HCT116 (cell line): ENCODE measurements at regions of chr15 and their contacts with region 1.

Region 1: DNA sequence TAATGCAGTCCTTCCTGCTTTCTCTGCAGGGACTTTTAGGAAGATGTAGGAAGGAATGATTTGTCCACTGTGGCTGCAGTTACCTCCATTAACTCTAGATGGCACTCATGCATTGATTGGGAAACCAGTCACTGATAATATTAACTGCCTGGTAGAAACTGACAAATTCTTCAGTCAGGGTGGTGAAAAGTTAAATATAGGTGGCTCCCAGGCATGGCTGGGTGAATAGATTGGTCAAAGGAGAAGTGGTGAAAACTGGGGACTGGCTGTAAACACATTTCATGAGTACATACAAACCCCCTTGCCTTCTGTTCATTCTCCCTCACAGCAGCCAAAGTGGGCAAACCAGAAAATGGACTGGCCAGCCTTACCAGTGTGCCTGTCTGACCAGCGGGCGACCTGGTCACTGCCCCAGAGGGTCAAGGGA is 333.4 kb downstream of the THSD4 start:
- DNase-seq: peak; percentile 56
- ATAC-seq: peak; percentile 26
- H3K4me3 ChIP-seq: no peak overlapping the region
- H3K27ac ChIP-seq: no peak overlapping the region; the same call in 1 of the 2 replicates
- H3K4me1 ChIP-seq: peaks cover 50 to 55% of the 10 kb centered on the region in 2 experiments
- H3K27me3 ChIP-seq: no peaks in the 10 kb centered on the region
- CTCF ChIP-seq: peak; percentile 79 to 94 (median 83)
- POLR2A ChIP-seq: no peak
- RAD21 ChIP-seq: peak; percentile 88

Region 2: GRCh38 chr15:71651750-71652186 is 203.1 kb after region 1 on chr15:
- CTCF ChIA-PET with region 1: no interaction called
- POLR2A ChIA-PET with region 1: no interaction called
- RAD21 ChIA-PET with region 1: no interaction called
- intact Hi-C with region 1: loop called (anchors 1 kb)
- DNase-seq: peak; percentile 39
- ATAC-seq: peak; percentile 75
- H3K4me3 ChIP-seq: no peak overlapping the region
- H3K27ac ChIP-seq: no peak overlapping the region
- H3K4me1 ChIP-seq: no peaks in the 10 kb centered on the region
- H3K27me3 ChIP-seq: no peaks in the 10 kb centered on the region
- CTCF ChIP-seq: peak; percentile 47 to 58 (median 49); a peak in 5 of 6 replicates
- POLR2A ChIP-seq: no peak
- RAD21 ChIP-seq: peak; percentile 67

Region 3: GRCh38 chr15:71730277-71731144 is 281.8 kb after region 1 on chr15:
- CTCF ChIA-PET with region 1: no interaction called
- POLR2A ChIA-PET with region 1: no interaction called
- RAD21 ChIA-PET with region 1: no interaction called
- intact Hi-C with region 1: loop called (anchors 1 kb)
- DNase-seq: peak; percentile 43
- ATAC-seq: peak; percentile 96
- H3K4me3 ChIP-seq: no peak overlapping the region
- H3K27ac ChIP-seq: no peak overlapping the region
- H3K4me1 ChIP-seq: no peaks in the 10 kb centered on the region
- H3K27me3 ChIP-seq: no peaks in the 10 kb centered on the region; the same call in 1 of the 2 replicates
- CTCF ChIP-seq: peak; percentile 70 to 82 (median 75)
- POLR2A ChIP-seq: no peak
- RAD21 ChIP-seq: peak; percentile 71

Region 4: DNA sequence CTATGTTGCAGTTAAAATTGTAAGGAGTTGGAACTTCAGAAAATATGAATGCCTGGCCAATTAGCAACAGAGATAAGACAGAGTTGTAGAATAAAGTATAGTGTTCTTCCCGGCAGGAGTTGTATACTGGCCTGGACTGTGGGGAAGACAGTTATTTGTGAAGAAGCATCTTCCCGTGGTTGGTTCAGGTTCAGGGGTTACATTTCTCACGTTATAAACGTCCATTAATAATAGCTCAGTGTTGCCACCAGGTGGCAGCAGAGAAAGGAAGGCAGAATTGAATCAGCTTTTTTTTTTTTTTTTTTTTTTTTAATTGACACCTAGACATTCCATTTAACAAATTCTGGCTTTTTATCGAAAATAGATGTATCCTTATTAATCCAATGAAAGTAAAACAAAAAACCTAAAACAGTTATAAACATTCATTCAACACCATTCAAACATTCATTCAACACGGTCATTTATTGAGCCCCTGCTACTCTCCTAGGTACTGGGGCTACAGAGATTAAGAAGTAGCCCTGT is 295.2 kb after region 1 on chr15:
- CTCF ChIA-PET with region 1: interaction called, 3 read pairs
- POLR2A ChIA-PET with region 1: no interaction called
- RAD21 ChIA-PET with region 1: interaction called in 1 of 2 experiments, 4 read pairs
- intact Hi-C with region 1: loop called (anchors 5 kb)
- DNase-seq: no peak
- ATAC-seq: no peak
- H3K4me3 ChIP-seq: no peak overlapping the region
- H3K27ac ChIP-seq: no peak overlapping the region
- H3K4me1 ChIP-seq: peaks cover 27 to 33% of the 10 kb centered on the region in 2 experiments
- H3K27me3 ChIP-seq: no peaks in the 10 kb centered on the region
- CTCF ChIP-seq: peak; percentile 57 to 78 (median 64); a peak in 5 of 6 replicates
- POLR2A ChIP-seq: no peak
- RAD21 ChIP-seq: peak; percentile 71

Region 5: GRCh38 chr15:72155635-72156616 is 707.2 kb after region 1 on chr15:
- CTCF ChIA-PET with region 1: no interaction called
- POLR2A ChIA-PET with region 1: interaction called, 7 read pairs
- RAD21 ChIA-PET with region 1: no interaction called
- intact Hi-C with region 1: loop called (anchors 1 kb)
- DNase-seq: peak; percentile 59
- ATAC-seq: peak; percentile 99
- H3K4me3 ChIP-seq: no peak overlapping the region
- H3K27ac ChIP-seq: no peak overlapping the region
- H3K4me1 ChIP-seq: peaks cover 4 to 12% of the 10 kb centered on the region in 2 experiments; a peak in 3 of 4 replicates
- H3K27me3 ChIP-seq: no peaks in the 10 kb centered on the region
- CTCF ChIP-seq: peak; percentile 74 to 92 (median 84); a peak in 5 of 6 replicates
- POLR2A ChIP-seq: no peak
- RAD21 ChIP-seq: peak; percentile 95